Activated CD8-positive, alpha-beta T cell treated with anti-CD3 and anti-CD28 coated beads for 36 hours (primary cell): ENCODE measurements at regions of chr3 and their contacts with region 1.

Region 1: DNA sequence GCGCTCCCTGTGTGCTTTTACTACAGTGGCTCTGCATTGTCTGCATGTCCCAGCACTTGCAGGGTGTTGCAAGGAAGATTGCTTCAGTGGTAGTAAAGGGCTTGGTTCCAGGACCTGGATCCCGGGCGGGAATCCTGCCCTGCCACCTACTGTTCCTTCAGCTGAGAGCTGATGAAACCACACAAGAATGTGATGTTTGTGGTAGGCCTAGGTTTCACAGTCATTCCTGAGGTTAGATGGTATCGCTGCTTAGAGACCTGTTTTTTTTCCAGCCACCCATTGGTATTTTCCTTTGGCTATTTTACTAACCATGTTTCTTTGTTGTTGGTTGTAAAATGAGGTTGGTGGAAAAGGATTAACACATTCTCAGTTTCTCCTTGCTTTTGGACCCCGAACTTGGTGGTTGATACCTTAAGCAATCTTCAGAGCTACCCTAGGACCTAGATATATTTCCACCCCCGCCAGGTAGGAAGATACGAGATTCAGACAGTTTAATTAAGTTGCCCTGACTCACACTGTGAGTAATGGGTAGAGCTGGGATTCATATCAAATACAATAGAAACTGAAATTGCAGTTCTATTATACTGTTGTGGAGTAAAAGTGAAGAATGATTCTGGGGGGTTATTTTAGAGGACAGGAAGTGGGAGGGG is 11.4 kb downstream of the GPR87 start:
- DNase-seq: peak; percentile 46
- ATAC-seq: peak; percentile 86
- H3K4me3 Mint-ChIP-seq: no peak overlapping the region
- H3K27ac Mint-ChIP-seq: peak overlapping the region; percentile 72
- H3K4me1 Mint-ChIP-seq: peaks cover 62% of the 10 kb centered on the region
- H3K27me3 Mint-ChIP-seq: peaks cover 13% of the 10 kb centered on the region
- CTCF ChIP-seq: no peak

Region 2: DNA sequence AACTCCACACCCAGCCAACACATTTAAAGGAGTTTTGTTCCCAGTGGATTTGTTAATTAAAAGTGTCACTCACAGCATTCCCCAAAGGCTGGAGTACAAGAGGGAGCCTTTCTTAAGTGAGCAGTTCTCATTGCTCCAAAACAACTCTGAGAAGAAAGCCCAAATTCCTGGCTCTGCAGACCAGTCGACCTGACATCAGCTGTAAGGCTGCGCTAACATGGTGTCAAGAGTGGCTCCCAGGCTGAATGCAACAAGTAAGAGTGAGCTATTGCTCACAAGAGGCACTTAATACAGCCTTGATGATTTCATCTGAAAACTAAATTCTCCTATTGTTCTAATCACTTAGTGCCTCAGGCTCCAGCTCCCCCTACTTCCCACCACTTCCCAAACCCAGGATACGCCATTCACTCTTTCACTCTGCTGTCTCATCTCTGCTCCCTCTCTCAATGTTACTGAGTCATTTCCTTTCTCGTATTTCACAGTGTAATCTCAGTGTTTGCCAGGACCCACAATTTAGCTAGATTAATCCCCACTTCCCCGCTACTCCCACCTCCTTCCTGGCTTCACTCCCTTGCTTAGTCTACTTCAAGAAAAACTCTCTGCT is 1729.2 kb before region 1 on chr3:
- CTCF ChIA-PET with region 1: no interaction called
- POLR2A ChIA-PET with region 1: no interaction called
- intact Hi-C with region 1: no loop called
- DNase-seq: no peak
- ATAC-seq: no peak
- H3K4me3 Mint-ChIP-seq: no peak overlapping the region
- H3K27ac Mint-ChIP-seq: no peak overlapping the region
- H3K4me1 Mint-ChIP-seq: peaks cover 21% of the 10 kb centered on the region
- H3K27me3 Mint-ChIP-seq: peaks cover 2% of the 10 kb centered on the region
- CTCF ChIP-seq: no peak

Region 3: DNA sequence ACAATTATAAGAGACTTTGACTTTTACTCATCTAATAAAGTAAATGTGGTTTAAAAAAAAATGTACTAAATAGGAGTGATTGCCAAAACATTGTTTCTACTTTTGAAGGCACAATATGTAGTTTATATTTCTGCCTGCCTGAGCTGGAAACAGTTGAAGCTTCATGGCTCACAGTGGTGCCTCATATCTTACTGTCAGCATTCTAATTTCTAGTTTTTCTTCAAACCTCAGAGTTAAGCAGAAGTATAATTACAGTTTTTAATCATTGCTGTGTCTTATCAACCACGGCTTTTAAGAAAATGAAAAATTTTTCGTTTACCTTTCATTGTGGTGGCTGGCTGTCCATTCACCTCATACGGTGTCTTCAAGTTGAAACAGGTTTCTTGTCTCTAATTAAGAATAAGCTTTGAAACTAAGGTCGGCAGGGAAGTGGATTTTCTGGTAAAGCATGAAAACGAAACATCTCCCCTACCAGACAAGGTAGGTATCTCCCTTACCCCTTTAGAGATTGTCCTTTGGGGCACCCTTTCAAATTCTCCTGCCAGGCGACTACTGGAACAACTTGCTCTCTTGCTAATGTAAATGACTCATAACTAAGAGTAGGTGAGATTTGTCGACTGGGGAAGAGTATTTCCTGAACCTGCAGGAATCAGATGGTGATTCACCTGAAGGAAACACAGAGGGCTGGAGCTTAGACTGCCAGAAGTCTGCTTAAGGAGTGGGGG is 11.2 kb after region 1 on chr3 and contains the start of gene GPR87:
- CTCF ChIA-PET with region 1: interaction called, 18 read pairs
- POLR2A ChIA-PET with region 1: interaction called, 5 read pairs
- intact Hi-C with region 1: no loop called
- DNase-seq: peak; percentile 27
- ATAC-seq: peak; percentile 78
- H3K4me3 Mint-ChIP-seq: peak within 1 kb of the TSS; percentile 24
- H3K27ac Mint-ChIP-seq: no peak within 1 kb of the TSS
- H3K4me1 Mint-ChIP-seq: peaks cover 22% of the 10 kb centered on the region
- H3K27me3 Mint-ChIP-seq: peaks cover 2% of the 10 kb centered on the region
- CTCF ChIP-seq: no peak
- total RNA-seq, gene GPR87: not detected

Region 4: GRCh38 chr3:151402294-151402693 is 97.1 kb after region 1 on chr3:
- CTCF ChIA-PET with region 1: no interaction called
- POLR2A ChIA-PET with region 1: no interaction called
- intact Hi-C with region 1: no loop called
- DNase-seq: no peak
- ATAC-seq: no peak
- H3K4me3 Mint-ChIP-seq: no peak overlapping the region
- H3K27ac Mint-ChIP-seq: no peak overlapping the region
- H3K4me1 Mint-ChIP-seq: no peaks in the 10 kb centered on the region
- H3K27me3 Mint-ChIP-seq: peaks cover 8% of the 10 kb centered on the region
- CTCF ChIP-seq: no peak

Region 5: GRCh38 chr3:151412989-151413388 is 107.8 kb after region 1 on chr3:
- CTCF ChIA-PET with region 1: no interaction called
- POLR2A ChIA-PET with region 1: no interaction called
- intact Hi-C with region 1: no loop called
- DNase-seq: peak; percentile 8
- ATAC-seq: no peak
- H3K4me3 Mint-ChIP-seq: no peak overlapping the region
- H3K27ac Mint-ChIP-seq: no peak overlapping the region
- H3K4me1 Mint-ChIP-seq: no peaks in the 10 kb centered on the region
- H3K27me3 Mint-ChIP-seq: no peaks in the 10 kb centered on the region
- CTCF ChIP-seq: no peak